Sciatic nerve (tissue), 2 donors: ENCODE measurements at regions of chr22 and their contacts with region 1.

Region 1: GRCh38 chr22:34454598-34454997 is 534.3 kb upstream of the LARGE1 start:
- DNase-seq: no peak
- ATAC-seq: no peak

Region 2: DNA sequence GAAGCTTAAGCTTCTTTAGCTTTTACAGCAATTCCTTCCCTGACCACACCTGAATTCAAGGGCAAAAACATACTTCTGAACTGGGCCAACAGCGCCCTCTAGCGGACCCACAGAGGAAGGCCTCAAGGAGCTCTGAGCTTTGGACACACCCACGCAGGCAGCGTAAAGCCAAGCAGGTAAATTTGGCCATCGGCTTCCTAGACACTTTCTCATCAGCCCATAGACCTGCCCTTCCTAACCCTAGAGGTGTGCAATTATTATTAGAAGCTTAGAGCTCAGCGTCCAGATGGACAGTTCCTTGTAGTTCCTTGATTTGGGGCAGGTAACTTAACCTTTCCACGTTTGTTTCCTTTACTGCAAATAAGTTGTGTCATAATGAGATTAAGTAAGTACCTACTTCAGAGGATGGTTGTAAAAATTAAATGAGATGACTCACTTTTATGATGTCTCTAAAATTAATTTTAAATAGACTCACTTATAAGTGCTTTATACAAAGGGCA is 777.0 kb after region 1 on chr22:
- intact Hi-C with region 1: loop called (anchors 5 kb)
- DNase-seq: no peak
- ATAC-seq: no peak